Heart left ventricle (tissue), 16 donors: ENCODE measurements at regions of chr13 and their contacts with region 1.

Region 1: DNA sequence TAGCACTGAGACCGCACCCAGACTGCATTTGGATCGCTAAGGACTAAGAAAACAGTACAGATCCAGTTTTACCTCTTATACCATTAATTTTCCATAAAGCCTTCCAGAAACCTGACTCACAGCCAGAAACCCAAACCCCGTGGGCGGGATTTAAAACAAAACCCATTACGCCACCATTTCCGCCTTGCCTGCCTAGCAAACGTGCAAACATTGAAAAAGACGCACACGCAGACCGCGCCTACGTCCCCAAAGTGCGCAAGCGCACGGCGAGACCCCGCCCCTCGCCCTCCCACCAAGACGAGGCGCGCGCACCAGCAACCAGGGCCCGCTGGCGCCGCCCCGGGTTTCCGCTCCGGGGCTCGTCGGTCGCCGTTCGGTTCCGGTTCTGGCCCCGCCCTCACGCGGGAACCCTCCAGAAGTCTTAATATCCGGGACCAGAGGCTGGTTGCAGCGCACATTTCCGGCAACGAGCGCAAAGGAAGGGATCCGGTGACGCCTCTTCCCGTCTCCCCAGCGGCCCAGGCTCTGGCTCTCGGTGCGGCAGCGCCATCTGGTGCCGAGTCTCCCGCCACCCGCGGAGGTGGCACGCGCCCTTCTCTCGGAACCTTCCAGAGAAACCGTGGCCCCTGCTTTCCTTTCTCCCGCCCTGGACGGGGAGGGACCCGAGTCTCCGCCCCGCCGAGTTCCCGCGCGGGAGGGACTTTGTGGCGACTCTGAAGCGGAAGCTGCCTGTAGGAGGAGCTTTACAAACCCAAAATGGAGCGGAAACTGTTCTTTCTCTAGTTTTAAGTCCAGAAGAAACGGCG is 256.9 kb upstream of the STARD13 start:
- DNase-seq: peak; percentile 98 to 99 (median 99)
- ATAC-seq: peak; percentile 92 to 98 (median 94)
- H3K4me3 ChIP-seq: peak overlapping the region; percentile 29 to 63 (median 54)
- H3K27ac ChIP-seq: peak overlapping the region; percentile 94 to 100 (median 97)
- H3K4me1 ChIP-seq: peaks cover 6 to 50% (median 26%) of the 10 kb centered on the region in 12 donors
- H3K27me3 ChIP-seq: no peaks in the 10 kb centered on the region
- CTCF ChIP-seq: peak; percentile 85 to 98 (median 92)
- POLR2A ChIP-seq: peak in 1 of 2 donors; percentile 56

Region 2: DNA sequence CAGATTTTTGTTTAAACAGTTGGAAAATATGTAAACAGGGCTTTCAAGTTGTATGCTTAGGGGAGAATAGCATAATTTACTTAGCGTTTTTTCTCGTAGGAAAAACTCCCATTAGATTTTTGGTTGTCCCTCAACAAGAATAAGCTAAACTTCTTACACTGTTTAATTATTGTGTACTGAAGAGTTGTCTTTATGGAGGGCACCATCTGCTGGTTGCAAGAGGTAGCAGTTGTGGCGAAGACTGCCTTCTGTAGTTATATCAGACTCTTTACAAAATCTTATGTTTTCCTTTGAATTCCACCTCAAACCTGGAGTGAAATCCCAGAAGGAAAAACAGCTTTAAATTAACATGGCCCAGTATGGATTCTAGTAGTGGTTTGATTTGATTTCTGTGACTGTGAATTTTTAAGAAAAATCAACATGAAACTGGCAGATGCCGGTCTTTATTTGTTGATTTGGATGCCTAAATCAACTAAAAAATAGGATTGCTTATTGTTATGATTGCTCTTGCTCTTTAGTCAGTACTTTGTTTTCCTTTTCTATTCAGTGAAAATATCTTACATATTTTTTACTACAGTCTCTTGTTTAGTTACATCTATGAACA is 902.9 kb before region 1 on chr13:
- intact Hi-C with region 1: loop called in 1 of 10 experiments (anchors 10 kb)
- DNase-seq: peak in 4 of 5 donors; percentile 43 to 58 (median 48)
- ATAC-seq: peak in 3 of 4 donors; percentile 80 to 91 (median 86)
- H3K4me3 ChIP-seq: no peak overlapping the region
- H3K27ac ChIP-seq: no peak overlapping the region
- H3K4me1 ChIP-seq: peaks cover 0 to 42% (median 9%) of the 10 kb centered on the region in 12 donors
- H3K27me3 ChIP-seq: no peaks in the 10 kb centered on the region
- CTCF ChIP-seq: peak; percentile 69 to 91 (median 82)
- POLR2A ChIP-seq: no peak

Region 3: GRCh38 chr13:32917504-32917903 is 625.0 kb before region 1 on chr13:
- intact Hi-C with region 1: no loop called
- DNase-seq: no peak
- ATAC-seq: no peak
- H3K4me3 ChIP-seq: no peak overlapping the region
- H3K27ac ChIP-seq: no peak overlapping the region
- H3K4me1 ChIP-seq: no peaks in the 10 kb centered on the region
- H3K27me3 ChIP-seq: no peaks in the 10 kb centered on the region
- CTCF ChIP-seq: no peak
- POLR2A ChIP-seq: no peak

Region 4: DNA sequence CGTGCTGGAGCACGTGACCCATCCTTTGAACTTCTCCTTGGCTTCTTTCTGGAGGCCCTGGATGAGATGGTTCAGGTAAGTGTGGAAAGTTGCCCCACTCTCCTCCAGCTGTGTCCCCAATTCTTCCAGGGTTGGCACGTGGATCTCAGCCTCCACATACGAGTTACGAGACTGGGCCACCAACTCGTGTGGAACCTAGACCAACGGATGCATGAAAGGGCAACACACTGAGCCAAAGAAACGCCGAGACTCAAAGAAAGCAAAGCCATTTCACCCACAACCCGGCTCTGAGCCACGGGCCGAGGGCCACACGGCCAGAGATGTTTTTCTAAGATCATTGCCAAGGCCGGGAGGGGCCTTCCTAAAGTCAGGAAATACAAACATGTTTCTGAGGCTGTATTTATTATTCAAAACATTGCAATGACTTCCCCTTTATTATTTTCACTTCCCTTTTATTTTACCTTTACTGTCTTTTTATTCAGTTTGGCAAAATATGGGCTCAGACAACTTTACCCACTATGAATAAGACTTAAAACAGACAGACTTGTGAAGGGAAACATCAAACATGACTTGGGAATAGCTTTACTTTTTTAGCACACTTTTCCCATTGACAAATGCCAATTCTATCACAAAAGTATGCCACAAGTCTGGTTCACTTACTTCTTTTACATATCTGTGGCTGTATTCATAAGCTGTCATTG is 431.6 kb before region 1 on chr13:
- intact Hi-C with region 1: loop called in 2 of 10 experiments (anchors 10 kb)
- DNase-seq: peak; percentile 61 to 80 (median 67)
- ATAC-seq: peak in 3 of 4 donors; percentile 42 to 53 (median 47)
- H3K4me3 ChIP-seq: no peak overlapping the region
- H3K27ac ChIP-seq: peak overlapping the region; percentile 29 to 83 (median 60)
- H3K4me1 ChIP-seq: peaks cover 3 to 65% (median 53%) of the 10 kb centered on the region in 12 donors
- H3K27me3 ChIP-seq: no peaks in the 10 kb centered on the region
- CTCF ChIP-seq: no peak
- POLR2A ChIP-seq: no peak

Region 5: DNA sequence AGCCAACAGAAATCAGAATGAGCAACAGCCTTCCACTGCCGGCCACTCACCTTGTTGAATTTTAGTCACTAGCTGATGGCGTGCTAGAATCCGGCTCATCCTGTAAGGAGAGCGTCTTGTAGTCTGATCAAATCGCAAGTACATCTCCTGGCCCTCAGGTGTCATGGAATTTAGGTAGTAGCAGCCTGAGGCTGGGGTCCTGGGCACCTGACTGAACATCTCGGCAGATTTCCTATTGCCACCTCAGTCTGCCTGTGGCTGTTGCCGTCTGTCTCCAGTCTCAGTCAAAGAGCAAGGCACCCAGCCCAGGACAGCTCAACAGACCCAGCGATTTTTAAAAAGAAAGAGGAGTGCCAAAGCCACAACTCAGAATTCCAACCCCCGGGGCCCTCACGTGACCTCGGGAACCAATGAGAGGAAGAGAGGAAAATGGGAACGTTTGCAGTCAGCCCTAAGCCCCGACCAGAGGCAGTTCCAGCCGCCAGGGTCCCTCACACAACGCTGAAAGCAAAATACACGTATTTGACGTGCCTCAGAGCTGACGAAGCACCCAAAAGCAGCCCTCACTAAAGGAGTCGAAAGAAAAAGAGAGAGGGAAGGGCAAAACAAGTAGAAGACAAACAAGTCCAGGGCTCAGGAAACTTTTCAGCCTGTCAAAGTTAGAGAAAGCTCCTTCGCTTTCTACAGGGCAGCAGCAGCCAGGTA is 256.9 kb before region 1 on chr13 and contains the start of gene STARD13:
- intact Hi-C with region 1: loop called in 5 of 10 experiments (anchors 1 to 2 kb)
- DNase-seq: peak; percentile 92 to 96 (median 95)
- ATAC-seq: peak; percentile 93 to 97 (median 95)
- H3K4me3 ChIP-seq: peak within 1 kb of the TSS; percentile 50 to 84 (median 68)
- H3K27ac ChIP-seq: peak within 1 kb of the TSS; percentile 89 to 98 (median 96)
- H3K4me1 ChIP-seq: peaks cover 0 to 56% (median 33%) of the 10 kb centered on the region in 12 donors
- H3K27me3 ChIP-seq: no peaks in the 10 kb centered on the region
- CTCF ChIP-seq: peak in 11 of 12 donors; percentile 11 to 68 (median 46)
- POLR2A ChIP-seq: peak in 1 of 2 donors; percentile 95
- total RNA-seq, gene STARD13: 18.6 to 39.2 (median 31.6) TPM

Region 6: DNA sequence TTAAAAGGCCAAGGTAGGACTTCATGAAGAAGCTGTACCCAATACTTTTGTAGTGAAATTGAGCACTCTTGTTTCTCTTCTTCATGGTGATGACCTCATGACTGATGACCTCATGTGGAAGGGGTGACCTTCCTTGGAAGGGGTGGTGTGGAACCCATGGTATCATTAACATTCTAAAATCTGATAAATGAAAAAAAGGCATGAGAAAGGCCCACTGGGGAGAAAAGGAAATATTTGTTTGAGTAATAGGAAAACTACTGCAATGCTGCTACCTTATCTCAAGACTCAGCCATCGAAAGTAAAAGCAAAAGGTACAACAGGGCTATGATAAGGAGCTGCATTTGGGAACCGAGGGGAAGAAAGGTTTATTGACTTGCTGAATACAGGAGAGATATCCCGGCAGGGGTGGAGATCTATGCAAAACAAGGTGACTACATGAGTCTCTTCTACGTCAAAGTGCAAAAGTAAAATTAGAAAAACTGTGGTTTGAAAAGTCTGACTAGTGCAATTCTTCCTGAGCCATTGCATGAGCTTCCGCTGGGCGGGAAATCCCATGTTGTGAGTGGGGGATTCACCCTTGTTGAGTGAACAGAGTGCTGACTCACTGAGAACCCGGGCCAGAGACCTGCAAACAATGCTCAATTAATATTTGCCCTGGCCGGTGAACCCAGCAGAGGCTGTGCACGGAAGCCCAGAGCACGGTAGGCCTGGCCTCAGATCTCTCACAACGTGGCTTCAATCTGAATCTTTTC is 136.6 kb after region 1 on chr13:
- intact Hi-C with region 1: loop called in 2 of 10 experiments (anchors 2 to 5 kb)
- DNase-seq: peak; percentile 51 to 66 (median 61)
- ATAC-seq: peak in 3 of 4 donors; percentile 44 to 75 (median 67)
- H3K4me3 ChIP-seq: peak overlapping the region in 6 of 12 donors; percentile 7 to 37 (median 22)
- H3K27ac ChIP-seq: peak overlapping the region in 11 of 12 donors; percentile 16 to 73 (median 49)
- H3K4me1 ChIP-seq: peaks cover 0 to 44% (median 18%) of the 10 kb centered on the region in 12 donors
- H3K27me3 ChIP-seq: no peaks in the 10 kb centered on the region
- CTCF ChIP-seq: no peak
- POLR2A ChIP-seq: no peak

Region 7: DNA sequence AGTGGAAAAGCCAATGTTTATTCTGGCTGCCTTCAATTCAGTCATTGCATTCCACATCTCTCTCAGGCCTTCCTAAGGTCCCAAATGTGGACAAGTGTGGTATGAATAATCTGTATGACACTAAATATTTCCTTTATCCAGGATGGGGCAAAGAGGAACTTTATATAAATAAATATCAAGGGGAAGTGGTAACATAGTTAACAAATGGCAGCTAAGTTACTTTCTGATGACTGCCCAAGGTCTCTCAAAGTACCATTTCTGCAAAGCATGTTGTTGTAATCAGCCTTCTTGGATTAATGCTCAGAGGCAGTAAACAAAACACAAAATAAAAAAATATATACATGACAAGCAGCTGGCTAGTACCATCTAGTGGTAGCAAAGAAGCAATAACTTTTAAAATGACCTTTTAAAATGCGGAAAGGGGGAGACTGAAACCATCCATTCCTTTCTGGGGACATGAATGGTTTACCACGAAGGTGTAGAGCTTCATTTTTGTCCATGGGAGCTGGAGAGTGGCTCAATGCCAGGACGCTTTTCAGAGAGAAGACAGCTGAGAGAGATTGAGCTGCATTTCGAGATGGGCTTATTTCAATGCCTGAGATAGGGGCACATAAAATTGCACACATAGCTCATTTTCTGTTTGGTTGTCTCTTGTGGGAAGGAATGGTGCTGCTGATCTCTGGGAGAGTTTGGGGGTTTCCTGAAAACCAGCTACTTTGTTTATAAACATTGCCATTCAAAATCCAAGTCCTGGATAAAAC is 534.6 kb after region 1 on chr13:
- intact Hi-C with region 1: loop called in 1 of 10 experiments (anchors 10 kb)
- DNase-seq: no peak
- ATAC-seq: peak in 1 of 4 donors; percentile 46
- H3K4me3 ChIP-seq: peak overlapping the region in 1 of 12 donors; percentile 24
- H3K27ac ChIP-seq: no peak overlapping the region
- H3K4me1 ChIP-seq: peaks cover 0 to 12% (median 3%) of the 10 kb centered on the region in 12 donors
- H3K27me3 ChIP-seq: no peaks in the 10 kb centered on the region
- CTCF ChIP-seq: peak; percentile 34 to 79 (median 66)
- POLR2A ChIP-seq: no peak